ENCODE measurements at regions of chr4 and their contacts with region 1.

Region 1: GRCh38 chr4:157840034-157840433 is 332.8 kb downstream of the GASK1B start:
- DNase-seq: no peak
- ATAC-seq: no peak

Region 2: DNA sequence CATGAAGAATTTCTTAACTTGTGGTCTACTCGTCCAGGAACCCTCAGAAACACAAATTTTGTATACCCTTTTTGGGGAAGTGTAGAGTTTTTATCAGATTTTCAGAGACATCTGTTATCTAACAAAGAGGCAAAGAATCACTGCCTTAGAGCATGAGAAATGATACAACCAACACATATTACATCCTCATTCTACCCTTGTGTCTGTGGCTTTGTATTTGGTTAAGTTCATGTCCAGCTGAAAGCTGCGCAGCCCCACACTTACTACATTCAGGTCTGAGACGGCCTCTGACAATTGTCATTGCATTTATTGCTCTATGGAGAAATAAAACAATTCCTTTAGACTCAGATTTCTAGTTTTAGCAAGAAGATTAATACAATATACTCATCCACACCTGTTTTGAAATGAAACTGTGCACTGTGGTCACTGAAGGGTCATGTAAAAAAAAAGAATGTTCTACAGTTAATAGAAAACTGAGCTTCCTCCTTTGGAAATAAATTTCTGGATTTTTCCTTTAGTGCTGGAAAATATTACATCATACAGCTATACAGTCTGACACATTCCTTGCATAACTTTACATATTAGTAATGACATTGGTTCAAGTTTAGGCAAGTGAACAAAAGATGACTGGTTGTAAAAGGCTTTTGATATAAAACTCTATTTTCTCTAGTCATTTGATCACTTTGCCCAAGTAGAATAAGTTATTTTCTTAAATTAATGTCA is 724.3 kb before region 1 on chr4:
- intact Hi-C with region 1: loop called in 1 of 2 experiments (anchors 5 kb)
- DNase-seq: no peak
- ATAC-seq: no peak

Region 3: DNA sequence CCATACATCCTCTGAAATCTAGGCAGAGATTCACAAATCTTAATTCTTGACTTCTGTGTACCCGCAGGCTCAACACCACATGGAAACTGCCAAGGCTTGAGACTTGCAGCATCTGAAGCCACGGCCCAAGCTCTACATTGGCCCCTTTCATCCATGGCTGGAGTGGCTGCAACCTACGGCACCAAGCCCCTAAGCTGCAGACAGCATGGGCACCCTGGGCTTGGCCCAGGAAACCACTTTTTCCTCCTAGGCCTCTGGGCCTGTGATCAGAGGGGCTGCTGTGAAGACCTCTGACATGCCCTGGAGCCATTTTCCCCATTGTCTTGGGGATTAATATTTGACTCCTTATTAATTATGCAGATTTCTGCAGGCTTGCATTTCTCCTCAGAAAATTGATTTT is 161.6 kb before region 1 on chr4:
- intact Hi-C with region 1: no loop called
- DNase-seq: no peak
- ATAC-seq: no peak

Region 4: DNA sequence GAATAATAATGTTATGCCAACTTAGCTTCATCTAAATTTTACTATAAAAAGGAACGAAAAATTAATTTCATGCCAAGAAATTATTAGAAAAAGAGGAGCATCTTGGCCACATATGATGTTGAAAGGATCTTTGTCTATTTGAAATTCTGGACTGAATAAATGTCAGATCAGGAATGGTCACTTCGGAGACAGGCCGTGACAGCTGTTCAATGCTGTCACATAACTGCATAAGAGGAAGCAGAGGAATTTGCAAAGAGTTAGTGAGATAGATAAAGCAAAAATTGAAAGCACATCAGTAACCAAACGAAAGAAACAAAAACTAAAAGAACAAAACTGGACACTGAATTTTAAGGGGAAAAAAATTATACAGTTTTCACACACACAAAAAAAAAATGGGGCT is 231.9 kb after region 1 on chr4:
- intact Hi-C with region 1: no loop called
- DNase-seq: no peak
- ATAC-seq: no peak